ENCODE measurements at regions of chr10 and their contacts with region 1.

Region 1: DNA sequence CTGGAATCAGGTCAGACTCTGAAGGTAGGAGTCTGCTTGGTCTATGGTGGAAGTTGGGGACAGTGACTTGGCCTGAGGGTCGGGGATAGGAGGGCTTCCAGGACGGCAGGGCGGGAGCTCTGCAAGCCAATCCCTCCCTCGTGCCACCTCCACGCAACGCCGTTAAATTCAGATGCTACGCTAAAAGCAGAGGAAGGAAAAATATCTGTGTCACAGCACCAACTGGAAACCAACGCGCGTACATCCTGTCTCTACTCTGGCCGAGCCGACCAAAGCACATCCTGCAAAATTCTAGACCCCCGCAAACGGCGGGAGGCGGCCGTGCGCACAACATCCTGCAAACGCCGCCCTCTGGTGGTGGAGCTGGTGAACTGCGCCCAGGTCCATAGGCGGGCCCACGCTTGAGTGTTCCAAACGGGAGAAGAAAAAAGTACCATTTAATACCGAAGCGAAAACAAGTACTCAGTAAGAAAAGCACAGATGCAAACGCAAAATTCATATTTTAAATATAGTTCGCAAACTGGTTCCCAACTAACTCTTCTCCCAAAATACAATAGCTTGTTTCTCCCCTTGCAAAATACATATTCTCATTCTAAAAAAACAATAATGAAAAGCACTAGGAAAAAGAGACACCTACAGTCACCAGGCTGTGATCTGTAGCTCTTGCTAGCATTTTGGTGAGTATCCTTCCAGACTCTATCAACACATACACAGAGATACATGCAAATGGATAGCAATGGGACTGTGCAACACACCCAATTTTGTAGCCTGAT is 45.7 kb upstream of the HSPA12A start:
- DNase-seq: peak; percentile 62
- H3K4me3 ChIP-seq: no peak overlapping the region
- H3K27ac ChIP-seq: no peak overlapping the region
- H3K4me1 ChIP-seq: no peaks in the 10 kb centered on the region
- H3K27me3 ChIP-seq: no peaks in the 10 kb centered on the region
- CTCF ChIP-seq: peak; percentile 94 to 97
- POLR2A ChIP-seq: no peak

Region 2: DNA sequence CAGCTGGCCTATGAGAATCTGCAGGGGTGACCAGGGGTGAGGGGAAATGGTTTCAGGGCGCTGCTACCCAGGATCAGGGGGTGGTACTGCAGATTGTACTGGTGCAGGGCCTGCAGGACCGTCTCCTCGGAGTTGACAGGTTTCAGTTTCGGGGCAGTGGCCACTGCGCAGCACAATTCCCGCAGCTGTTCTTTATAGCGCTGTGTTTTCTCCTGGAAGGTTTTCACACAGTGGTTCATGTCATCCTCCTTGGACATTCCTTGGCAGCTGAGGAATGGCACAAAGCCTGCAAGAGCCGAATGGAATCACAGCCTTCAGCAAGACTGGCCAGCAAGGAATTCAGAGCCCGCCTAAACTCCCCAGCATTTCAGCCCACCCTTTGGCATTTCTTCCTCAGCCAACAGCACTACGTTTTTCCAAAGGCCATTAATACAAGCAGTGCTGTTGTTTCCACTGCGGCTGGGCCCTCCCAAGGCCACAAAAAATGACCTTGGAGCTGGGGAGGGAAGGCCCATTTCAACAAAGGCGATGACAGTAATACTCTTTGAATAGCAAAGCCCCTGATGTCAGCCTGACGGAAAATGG is 122.4 kb before region 1 on chr10:
- CTCF ChIA-PET with region 1: no interaction called
- POLR2A ChIA-PET with region 1: no interaction called
- dilution Hi-C with region 1: no loop called
- intact Hi-C with region 1: no loop called
- DNase-seq: no peak
- H3K4me3 ChIP-seq: no peak overlapping the region
- H3K27ac ChIP-seq: no peak overlapping the region
- H3K4me1 ChIP-seq: no peaks in the 10 kb centered on the region
- H3K27me3 ChIP-seq: no peaks in the 10 kb centered on the region
- CTCF ChIP-seq: no peak
- POLR2A ChIP-seq: no peak

Region 3: GRCh38 chr10:116690356-116691322 is 97.4 kb before region 1 on chr10:
- CTCF ChIA-PET with region 1: interaction called, 120 read pairs
- POLR2A ChIA-PET with region 1: no interaction called
- dilution Hi-C with region 1: no loop called
- intact Hi-C with region 1: loop called (anchors 1 kb)
- DNase-seq: no peak
- H3K4me3 ChIP-seq: no peak overlapping the region
- H3K27ac ChIP-seq: no peak overlapping the region
- H3K4me1 ChIP-seq: no peaks in the 10 kb centered on the region
- H3K27me3 ChIP-seq: no peaks in the 10 kb centered on the region
- CTCF ChIP-seq: peak in 1 of 2 donors; percentile 12
- POLR2A ChIP-seq: no peak

Region 4: GRCh38 chr10:116742367-116743265 is 45.5 kb before region 1 on chr10 and contains the start of gene HSPA12A:
- CTCF ChIA-PET with region 1: interaction called, 20 read pairs
- POLR2A ChIA-PET with region 1: no interaction called
- dilution Hi-C with region 1: no loop called
- intact Hi-C with region 1: loop called (anchors 1 kb)
- DNase-seq: peak; percentile 62
- H3K4me3 ChIP-seq: peak within 1 kb of the TSS; percentile 29 to 34 (median 31)
- H3K27ac ChIP-seq: no peak within 1 kb of the TSS
- H3K4me1 ChIP-seq: peaks cover 7% of the 10 kb centered on the region
- H3K27me3 ChIP-seq: peaks cover 18 to 21% of the 10 kb centered on the region in 2 experiments
- CTCF ChIP-seq: no peak
- POLR2A ChIP-seq: no peak
- total RNA-seq, gene HSPA12A: 0.22 and 0.30 TPM in 2 replicates

Region 5: DNA sequence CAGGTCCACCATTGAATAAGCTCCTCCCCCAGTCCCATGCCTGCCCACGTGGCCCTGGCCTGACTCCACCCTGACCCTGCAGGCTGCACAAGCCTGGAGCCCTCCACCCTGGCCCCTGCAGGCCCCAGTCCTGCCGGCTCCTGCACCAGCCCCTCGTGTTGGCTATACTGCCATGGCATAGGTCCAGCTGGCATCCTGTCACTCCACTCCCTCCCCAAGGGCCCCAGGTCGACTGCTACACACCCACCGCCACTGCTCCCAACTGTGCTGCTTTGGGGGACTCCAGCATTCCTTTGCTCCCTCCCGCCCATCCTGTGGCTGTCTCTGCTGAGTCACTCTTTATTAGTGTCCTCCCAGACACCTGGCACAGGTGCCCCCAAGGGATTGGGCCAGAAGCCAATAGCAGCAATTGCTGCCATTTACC is 13.3 kb before region 1 on chr10:
- CTCF ChIA-PET with region 1: interaction called, 52 read pairs
- POLR2A ChIA-PET with region 1: interaction called, 5 read pairs
- dilution Hi-C with region 1: no loop called
- intact Hi-C with region 1: no loop called
- DNase-seq: no peak
- H3K4me3 ChIP-seq: no peak overlapping the region
- H3K27ac ChIP-seq: no peak overlapping the region
- H3K4me1 ChIP-seq: no peaks in the 10 kb centered on the region
- H3K27me3 ChIP-seq: no peaks in the 10 kb centered on the region
- CTCF ChIP-seq: no peak
- POLR2A ChIP-seq: no peak

Region 6: DNA sequence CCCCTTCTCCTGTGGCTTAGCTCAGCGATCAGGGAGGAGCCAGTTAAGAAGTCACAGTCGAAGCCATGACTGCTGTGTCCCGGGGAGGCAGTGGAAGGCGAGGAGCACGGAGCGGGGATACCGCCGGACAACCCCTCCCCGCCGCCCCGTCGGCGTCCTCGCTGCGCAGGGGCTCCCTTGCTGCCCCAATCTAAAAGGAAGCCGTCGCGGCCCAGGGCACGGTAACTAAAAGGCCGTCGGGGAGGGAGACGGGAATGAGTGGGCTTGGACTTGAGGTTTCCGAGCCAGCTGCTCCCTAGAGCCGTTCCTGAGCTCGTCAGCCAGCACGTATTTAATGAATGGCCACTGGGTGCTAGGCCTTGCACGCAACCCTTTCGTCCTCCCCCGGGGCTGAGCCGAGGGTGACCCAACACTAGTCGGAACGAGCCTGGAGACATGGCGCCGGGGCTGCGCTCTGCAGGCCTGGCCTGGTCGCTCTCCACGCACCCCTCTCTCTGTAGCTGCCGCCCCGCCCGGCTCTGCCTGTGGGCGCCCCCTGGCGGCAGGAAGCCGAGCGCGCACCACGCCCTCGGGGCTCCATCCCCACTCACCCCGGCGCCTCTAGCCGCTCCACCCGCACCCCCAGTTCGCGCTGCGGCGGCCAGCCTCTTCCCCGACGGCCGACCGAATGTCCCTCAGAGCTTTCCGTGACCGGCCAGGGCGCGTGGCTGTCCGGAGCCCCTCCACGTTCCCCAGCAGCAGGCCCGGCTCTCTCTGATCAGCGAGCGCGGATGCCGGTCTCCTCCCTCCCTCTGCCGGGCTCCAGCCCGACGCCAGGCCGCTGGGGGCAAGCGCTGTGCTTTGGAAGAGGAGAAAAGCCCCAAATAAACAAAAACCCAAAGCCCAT is 380.0 kb after region 1 on chr10:
- CTCF ChIA-PET with region 1: interaction called, 98 read pairs
- POLR2A ChIA-PET with region 1: no interaction called
- dilution Hi-C with region 1: no loop called
- intact Hi-C with region 1: no loop called
- DNase-seq: peak; percentile 27
- H3K4me3 ChIP-seq: no peak overlapping the region
- H3K27ac ChIP-seq: no peak overlapping the region
- H3K4me1 ChIP-seq: peaks cover 3% of the 10 kb centered on the region
- H3K27me3 ChIP-seq: peaks cover 82 to 91% of the 10 kb centered on the region in 2 experiments
- CTCF ChIP-seq: peak; percentile 90 to 93
- POLR2A ChIP-seq: no peak